Left ventricle myocardium superior (tissue), 1 donor: ENCODE measurements at regions of chr9 and their contacts with region 1.

Region 1: GRCh38 chr9:20865347-20865746 is 166.1 kb downstream of the HACD4 start:
- DNase-seq: no peak
- ATAC-seq: no peak

Region 2: DNA sequence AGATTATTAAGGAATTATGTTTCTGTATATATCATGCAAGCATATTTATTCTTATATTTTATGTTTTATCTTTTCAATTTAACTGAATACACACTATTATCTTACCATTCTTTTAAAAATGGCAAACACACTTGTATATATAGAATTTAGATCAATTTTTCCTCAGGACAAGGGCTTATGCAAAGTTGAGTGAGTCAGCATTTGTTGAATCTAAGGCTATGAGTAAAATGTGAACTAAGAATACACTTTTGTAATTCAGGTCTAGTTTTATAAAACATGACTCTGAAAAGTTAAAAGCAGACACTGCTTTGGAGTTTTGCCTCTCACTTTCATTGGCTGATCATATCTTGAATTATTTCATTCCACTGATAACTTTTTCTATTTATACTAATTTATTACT is 53.5 kb before region 1 on chr9:
- intact Hi-C with region 1: loop called (anchors 10 kb)
- DNase-seq: no peak
- ATAC-seq: no peak